CD4-positive, alpha-beta memory T cell (primary cell): ENCODE measurements at regions of chr2 and their contacts with region 1.

Region 1: DNA sequence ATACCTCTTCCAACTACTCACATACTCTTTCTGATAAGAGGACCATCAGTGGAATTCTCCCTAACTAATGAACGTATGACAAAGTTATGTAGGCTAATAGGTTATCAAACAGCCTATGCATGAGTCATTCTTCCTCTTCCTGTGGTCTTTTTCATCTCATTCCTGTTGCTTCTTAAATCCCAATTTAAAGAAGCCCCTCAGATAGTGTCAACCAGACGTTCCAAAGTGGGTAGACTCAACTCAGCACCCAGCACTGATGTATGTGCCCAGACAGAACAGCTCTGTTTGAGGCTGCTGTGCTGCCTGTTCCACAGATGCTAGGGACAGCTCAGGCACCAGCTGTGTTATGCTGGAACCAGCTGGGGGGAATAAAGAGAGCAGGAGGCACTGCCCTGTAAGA is 52.6 kb downstream of the CXCR4 start:
- DNase-seq: no peak
- H3K4me3 ChIP-seq: no peak overlapping the region
- H3K4me3 Mint-ChIP-seq: peak overlapping the region in 5 of 8 donors; percentile 17 to 64 (median 40)
- H3K27ac ChIP-seq: no peak overlapping the region
- H3K27ac Mint-ChIP-seq: peak overlapping the region in 4 of 7 donors; percentile 58 to 88 (median 82)
- H3K4me1 ChIP-seq: peaks cover 39% of the 10 kb centered on the region
- H3K4me1 Mint-ChIP-seq: peaks cover 35 to 71% (median 45%) of the 10 kb centered on the region in 4 donors
- H3K27me3 ChIP-seq: no peaks in the 10 kb centered on the region
- H3K27me3 Mint-ChIP-seq: no peaks in the 10 kb centered on the region

Region 2: DNA sequence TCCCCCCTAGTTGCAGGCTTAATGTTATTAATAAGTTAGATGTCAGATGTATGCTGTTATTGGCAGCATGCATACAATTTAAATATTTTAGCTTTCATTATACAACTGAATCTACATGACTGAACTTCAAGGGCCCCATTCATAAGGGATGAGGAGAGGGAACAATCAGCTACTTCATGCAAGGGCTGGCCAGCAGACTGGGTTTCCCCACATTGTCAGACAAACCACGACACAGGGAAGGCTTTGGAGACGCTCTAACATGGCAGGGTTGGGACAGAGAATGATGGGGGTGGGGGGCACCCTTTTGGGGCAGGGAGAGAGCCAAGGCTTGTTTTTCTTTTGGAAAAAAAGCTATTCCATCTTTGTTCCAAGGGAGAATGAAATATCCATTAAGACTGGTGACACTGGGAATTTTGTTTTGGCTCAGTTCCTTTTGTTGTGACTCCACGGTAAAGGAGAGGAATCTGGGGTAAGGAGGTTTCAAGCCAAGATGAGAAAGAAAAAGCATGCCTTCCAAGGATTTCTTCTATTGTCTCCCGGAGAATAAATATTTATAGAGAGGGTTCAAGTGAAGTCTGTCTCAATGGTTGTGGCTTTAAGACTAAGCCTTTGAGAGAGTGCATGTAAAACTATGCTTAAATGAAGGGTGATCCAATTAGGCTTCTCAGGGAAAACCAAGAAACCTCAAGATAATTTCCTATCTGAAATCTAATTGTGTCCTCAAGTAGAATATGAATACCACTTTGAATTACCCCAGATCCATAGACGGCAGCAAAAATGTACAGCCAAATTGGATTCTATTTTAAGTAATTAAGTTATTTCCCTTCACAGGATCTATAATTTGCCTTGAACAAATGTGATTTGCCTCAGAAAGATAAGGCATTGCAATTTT is 47.2 kb after region 1 on chr2:
- CTCF ChIA-PET with region 1: no interaction called
- POLR2A ChIA-PET with region 1: interaction called, 3 read pairs
- intact Hi-C with region 1: loop called (anchors 5 kb)
- DNase-seq: peak in 1 of 5 donors; percentile 42
- H3K4me3 ChIP-seq: no peak overlapping the region
- H3K4me3 Mint-ChIP-seq: peak overlapping the region in 4 of 8 donors; percentile 36 to 88 (median 56)
- H3K27ac ChIP-seq: no peak overlapping the region
- H3K27ac Mint-ChIP-seq: peak overlapping the region in 4 of 7 donors; percentile 79 to 99 (median 92)
- H3K4me1 ChIP-seq: peaks cover 34% of the 10 kb centered on the region
- H3K4me1 Mint-ChIP-seq: peaks cover 31 to 50% (median 38%) of the 10 kb centered on the region in 4 donors
- H3K27me3 ChIP-seq: no peaks in the 10 kb centered on the region
- H3K27me3 Mint-ChIP-seq: no peaks in the 10 kb centered on the region